ENCODE measurements at regions of chr3 and their contacts with region 1.

Region 1: DNA sequence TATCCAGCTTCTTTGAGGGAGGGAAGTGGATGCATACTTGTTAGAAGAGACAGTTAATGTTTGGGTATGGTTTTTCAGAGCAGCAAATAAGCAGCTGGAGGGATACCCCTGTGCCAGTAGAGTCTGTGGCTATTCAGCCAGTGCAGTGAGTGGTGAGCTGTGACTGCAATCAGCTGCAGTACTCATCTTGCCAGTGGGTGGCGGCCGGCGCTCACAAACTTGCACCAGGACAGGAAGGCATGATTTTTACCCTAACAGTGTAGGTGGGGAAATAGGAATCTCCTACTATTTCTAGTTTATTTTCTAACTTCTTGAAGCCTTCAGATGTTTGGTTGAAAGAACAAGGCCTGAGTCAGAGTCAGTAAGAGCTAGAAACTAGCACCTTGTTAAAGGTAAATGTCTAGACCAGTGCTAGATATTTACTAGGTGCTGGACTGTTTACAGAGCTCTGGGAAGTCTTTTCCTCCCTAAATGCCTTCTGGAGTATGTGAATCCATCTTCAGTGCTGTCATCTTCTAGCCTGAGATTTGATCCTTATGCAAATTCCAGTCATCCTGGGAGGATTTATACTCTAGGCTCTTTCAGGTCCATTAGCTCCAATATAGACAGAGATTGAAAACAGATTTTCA is 23.6 kb downstream of the TIMP4 start:
- DNase-seq: peak; percentile 78
- H3K4me3 Mint-ChIP-seq: no peak overlapping the region
- H3K27ac Mint-ChIP-seq: no peak overlapping the region
- H3K4me1 Mint-ChIP-seq: no peaks in the 10 kb centered on the region
- H3K27me3 Mint-ChIP-seq: peaks cover 12% of the 10 kb centered on the region

Region 2: GRCh38 chr3:12175844-12176453 is 40.8 kb after region 1 on chr3:
- CTCF ChIA-PET with region 1: interaction called, 139 read pairs
- POLR2A ChIA-PET with region 1: no interaction called
- intact Hi-C with region 1: loop called (anchors 1 kb)
- DNase-seq: peak; percentile 62
- H3K4me3 Mint-ChIP-seq: no peak overlapping the region
- H3K27ac Mint-ChIP-seq: no peak overlapping the region
- H3K4me1 Mint-ChIP-seq: peaks cover 18% of the 10 kb centered on the region
- H3K27me3 Mint-ChIP-seq: no peaks in the 10 kb centered on the region

Region 3: DNA sequence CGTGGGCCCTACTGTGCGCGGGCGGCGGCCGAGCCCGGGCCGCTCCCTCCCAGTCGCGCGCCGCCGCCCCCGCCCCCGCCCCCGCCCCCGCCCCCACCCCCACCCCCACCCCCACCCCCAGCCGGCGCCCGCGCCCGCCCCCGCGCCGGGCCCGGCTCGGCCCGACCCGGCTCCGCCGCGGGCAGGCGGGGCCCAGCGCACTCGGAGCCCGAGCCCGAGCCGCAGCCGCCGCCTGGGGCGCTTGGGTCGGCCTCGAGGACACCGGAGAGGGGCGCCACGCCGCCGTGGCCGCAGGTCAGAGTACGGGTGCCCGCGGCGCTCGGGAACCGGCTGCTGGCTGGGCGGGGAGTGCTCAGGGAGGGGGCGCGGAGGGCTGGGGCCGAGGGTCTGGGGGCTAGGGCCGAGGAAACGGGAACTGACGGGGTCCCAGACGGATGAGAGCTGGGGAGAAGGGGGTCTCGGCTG is 152.6 kb after region 1 on chr3:
- CTCF ChIA-PET with region 1: interaction called, 6 read pairs
- POLR2A ChIA-PET with region 1: no interaction called
- intact Hi-C with region 1: loop called (anchors 5 kb)
- DNase-seq: peak; percentile 19
- H3K4me3 Mint-ChIP-seq: peak overlapping the region; percentile 43
- H3K27ac Mint-ChIP-seq: no peak overlapping the region
- H3K4me1 Mint-ChIP-seq: peaks cover 10% of the 10 kb centered on the region
- H3K27me3 Mint-ChIP-seq: peaks cover 43% of the 10 kb centered on the region

Region 4: GRCh38 chr3:12349895-12350813 is 215.0 kb after region 1 on chr3:
- CTCF ChIA-PET with region 1: interaction called, 8 read pairs
- POLR2A ChIA-PET with region 1: no interaction called
- intact Hi-C with region 1: loop called (anchors 10 kb)
- DNase-seq: no peak
- H3K4me3 Mint-ChIP-seq: no peak overlapping the region
- H3K27ac Mint-ChIP-seq: no peak overlapping the region
- H3K4me1 Mint-ChIP-seq: peaks cover 9% of the 10 kb centered on the region
- H3K27me3 Mint-ChIP-seq: peaks cover 21% of the 10 kb centered on the region

Measured in activated CD4-positive, alpha-beta memory T cell treated with anti-CD3 and anti-CD28 coated beads for 36 hours (primary cell).